ENCODE measurements at regions of chr4 and their contacts with region 1.

Region 1: GRCh38 chr4:15396157-15396800 is 31.6 kb upstream of the C1QTNF7 start:
- DNase-seq: peak; percentile 61
- H3K4me3 ChIP-seq: no peak overlapping the region
- H3K27ac ChIP-seq: no peak overlapping the region
- H3K4me1 ChIP-seq: peaks cover 7% of the 10 kb centered on the region
- CTCF ChIP-seq: peak; percentile 85

Region 2: GRCh38 chr4:15238720-15239119 is 157.6 kb before region 1 on chr4:
- CTCF ChIA-PET with region 1: no interaction called
- POLR2A ChIA-PET with region 1: no interaction called
- intact Hi-C with region 1: loop called (anchors 2 kb)
- DNase-seq: peak; percentile 30
- H3K4me3 ChIP-seq: no peak overlapping the region
- H3K27ac ChIP-seq: no peak overlapping the region
- H3K4me1 ChIP-seq: no peaks in the 10 kb centered on the region
- CTCF ChIP-seq: peak; percentile 82

Region 3: DNA sequence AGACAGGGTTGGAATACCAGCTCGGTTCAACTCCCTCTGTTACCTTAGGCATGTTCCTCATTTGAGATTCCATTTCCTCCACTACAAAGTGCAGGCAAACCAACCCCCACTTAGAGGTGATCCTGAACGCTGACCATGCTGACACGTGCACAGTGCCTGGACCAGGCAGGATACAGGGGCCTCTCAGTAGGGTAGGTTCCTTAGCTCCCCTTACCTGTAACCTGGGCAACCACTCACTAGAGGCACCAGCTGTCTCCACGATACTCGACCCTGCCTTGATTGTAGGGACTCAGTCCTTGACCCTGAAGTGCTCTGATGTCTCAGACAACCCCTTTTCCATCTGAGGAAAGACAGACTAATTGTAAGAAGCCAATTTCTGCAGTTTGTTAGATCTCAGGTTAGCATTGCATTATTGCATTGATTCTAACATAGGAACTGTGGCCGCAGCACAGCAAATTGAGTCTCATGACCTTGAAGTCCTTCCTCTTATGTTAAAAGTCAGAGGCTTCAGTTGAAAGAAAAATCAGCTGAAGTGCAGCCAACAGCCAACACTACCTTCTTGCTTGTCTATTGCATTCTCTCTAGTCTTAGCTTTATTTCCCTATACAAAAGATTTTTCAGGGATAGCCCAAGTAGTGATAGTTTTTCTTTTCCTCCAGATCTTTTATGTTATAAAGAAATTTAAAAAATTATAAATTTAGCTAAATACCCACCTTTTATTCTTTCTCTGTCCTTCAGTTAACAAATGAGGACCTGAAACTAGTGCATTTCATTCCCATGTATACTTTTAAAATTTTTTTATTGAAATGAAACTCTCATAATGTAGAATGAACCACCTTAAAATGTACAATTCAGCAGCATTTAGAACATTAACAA is 20.3 kb after region 1 on chr4:
- CTCF ChIA-PET with region 1: no interaction called
- POLR2A ChIA-PET with region 1: interaction called, 4 read pairs
- intact Hi-C with region 1: loop called (anchors 1 kb)
- DNase-seq: no peak
- H3K4me3 ChIP-seq: no peak overlapping the region
- H3K27ac ChIP-seq: no peak overlapping the region
- H3K4me1 ChIP-seq: peaks cover 29% of the 10 kb centered on the region
- CTCF ChIP-seq: no peak

Region 4: DNA sequence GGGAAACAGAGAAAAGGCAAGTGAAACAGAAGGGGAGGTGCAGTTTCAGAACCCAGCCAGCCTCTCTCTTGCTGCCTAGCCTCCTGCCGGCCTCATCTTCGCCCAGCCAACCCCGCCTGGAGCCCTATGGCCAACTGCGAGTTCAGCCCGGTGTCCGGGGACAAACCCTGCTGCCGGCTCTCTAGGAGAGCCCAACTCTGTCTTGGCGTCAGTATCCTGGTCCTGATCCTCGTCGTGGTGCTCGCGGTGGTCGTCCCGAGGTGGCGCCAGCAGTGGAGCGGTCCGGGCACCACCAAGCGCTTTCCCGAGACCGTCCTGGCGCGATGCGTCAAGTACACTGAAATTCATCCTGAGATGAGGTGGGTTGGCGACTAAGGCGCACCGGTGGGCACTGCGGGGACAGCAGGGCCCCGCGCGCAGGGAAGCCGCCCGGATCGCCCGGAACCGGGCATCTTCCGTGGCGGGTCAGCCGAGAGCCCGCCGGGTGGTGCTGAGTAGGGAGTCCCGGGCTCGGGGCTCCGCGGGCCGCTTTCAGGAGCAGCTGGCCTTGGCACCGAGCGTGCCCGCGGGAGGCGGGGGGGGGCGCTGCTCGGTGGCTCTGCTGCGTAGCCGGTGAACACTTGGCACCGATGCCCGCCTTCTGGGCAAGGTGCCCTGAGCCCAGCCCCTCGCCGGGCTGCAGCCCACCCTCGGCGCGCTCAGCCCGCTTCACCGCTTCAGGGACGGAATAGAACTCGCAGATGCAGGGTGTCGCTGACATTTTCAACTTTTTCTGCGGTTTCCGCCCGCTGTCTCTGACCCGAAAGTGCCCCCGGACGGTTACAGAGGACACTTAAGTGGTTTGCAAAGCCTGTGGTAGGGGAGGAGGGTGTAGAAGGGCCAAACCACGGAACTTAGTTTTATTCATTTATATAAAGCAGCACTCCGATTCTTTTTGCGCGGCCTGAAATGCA is 382.3 kb after region 1 on chr4 and contains the start of gene CD38:
- CTCF ChIA-PET with region 1: no interaction called
- POLR2A ChIA-PET with region 1: no interaction called
- intact Hi-C with region 1: no loop called
- DNase-seq: peak; percentile 90
- H3K4me3 ChIP-seq: peak within 1 kb of the TSS; percentile 76
- H3K27ac ChIP-seq: peak within 1 kb of the TSS; percentile 96
- H3K4me1 ChIP-seq: peaks cover 62% of the 10 kb centered on the region
- CTCF ChIP-seq: peak; percentile 24; the same call in 1 of the 2 replicates
- total RNA-seq, gene CD38: 92.0 and 103 TPM in 2 replicates